ENCODE measurements at regions of chr20 and their contacts with region 1.

Region 1: GRCh38 chr20:16761305-16761829 is 13.2 kb downstream of the OTOR start:
- DNase-seq: peak; percentile 48 to 59 (median 52)
- H3K4me3 ChIP-seq: no peak overlapping the region
- H3K4me3 Mint-ChIP-seq: no peak overlapping the region
- H3K27ac ChIP-seq: no peak overlapping the region
- H3K27ac Mint-ChIP-seq: no peak overlapping the region
- H3K4me1 ChIP-seq: no peaks in the 10 kb centered on the region
- H3K4me1 Mint-ChIP-seq: peaks cover 0 to 2% (median under 1%) of the 10 kb centered on the region in 4 donors
- H3K27me3 ChIP-seq: no peaks in the 10 kb centered on the region
- H3K27me3 Mint-ChIP-seq: peaks cover 7 to 22% of the 10 kb centered on the region in 2 donors

Region 2: GRCh38 chr20:15708984-15709598 is 1052.3 kb before region 1 on chr20:
- CTCF ChIA-PET with region 1: interaction called, 9 read pairs
- POLR2A ChIA-PET with region 1: no interaction called
- intact Hi-C with region 1: loop called (anchors 5 kb)
- DNase-seq: peak in 1 of 5 donors; percentile 2
- H3K4me3 ChIP-seq: no peak overlapping the region
- H3K4me3 Mint-ChIP-seq: no peak overlapping the region
- H3K27ac ChIP-seq: no peak overlapping the region
- H3K27ac Mint-ChIP-seq: no peak overlapping the region
- H3K4me1 ChIP-seq: no peaks in the 10 kb centered on the region
- H3K4me1 Mint-ChIP-seq: no peaks in the 10 kb centered on the region
- H3K27me3 ChIP-seq: no peaks in the 10 kb centered on the region
- H3K27me3 Mint-ChIP-seq: no peaks in the 10 kb centered on the region

Region 3: GRCh38 chr20:16517946-16518783 is 243.2 kb before region 1 on chr20:
- CTCF ChIA-PET with region 1: interaction called, 19 read pairs
- POLR2A ChIA-PET with region 1: no interaction called
- intact Hi-C with region 1: no loop called
- DNase-seq: peak in 4 of 5 donors; percentile 7 to 21 (median 8)
- H3K4me3 ChIP-seq: no peak overlapping the region
- H3K4me3 Mint-ChIP-seq: no peak overlapping the region
- H3K27ac ChIP-seq: no peak overlapping the region
- H3K27ac Mint-ChIP-seq: no peak overlapping the region
- H3K4me1 ChIP-seq: no peaks in the 10 kb centered on the region
- H3K4me1 Mint-ChIP-seq: peaks cover 0 to 2% (median 0%) of the 10 kb centered on the region in 4 donors
- H3K27me3 ChIP-seq: no peaks in the 10 kb centered on the region
- H3K27me3 Mint-ChIP-seq: no peaks in the 10 kb centered on the region

Region 4: GRCh38 chr20:16701296-16701695 is 60.1 kb before region 1 on chr20:
- CTCF ChIA-PET with region 1: interaction called, 17 read pairs
- POLR2A ChIA-PET with region 1: no interaction called
- intact Hi-C with region 1: loop called (anchors 1 kb)
- DNase-seq: peak; percentile 21 to 50 (median 27)
- H3K4me3 ChIP-seq: no peak overlapping the region
- H3K4me3 Mint-ChIP-seq: no peak overlapping the region
- H3K27ac ChIP-seq: no peak overlapping the region
- H3K27ac Mint-ChIP-seq: no peak overlapping the region
- H3K4me1 ChIP-seq: no peaks in the 10 kb centered on the region
- H3K4me1 Mint-ChIP-seq: peaks cover 0 to 3% (median under 1%) of the 10 kb centered on the region in 4 donors
- H3K27me3 ChIP-seq: no peaks in the 10 kb centered on the region
- H3K27me3 Mint-ChIP-seq: peaks cover 5 to 9% of the 10 kb centered on the region in 2 donors

Region 5: DNA sequence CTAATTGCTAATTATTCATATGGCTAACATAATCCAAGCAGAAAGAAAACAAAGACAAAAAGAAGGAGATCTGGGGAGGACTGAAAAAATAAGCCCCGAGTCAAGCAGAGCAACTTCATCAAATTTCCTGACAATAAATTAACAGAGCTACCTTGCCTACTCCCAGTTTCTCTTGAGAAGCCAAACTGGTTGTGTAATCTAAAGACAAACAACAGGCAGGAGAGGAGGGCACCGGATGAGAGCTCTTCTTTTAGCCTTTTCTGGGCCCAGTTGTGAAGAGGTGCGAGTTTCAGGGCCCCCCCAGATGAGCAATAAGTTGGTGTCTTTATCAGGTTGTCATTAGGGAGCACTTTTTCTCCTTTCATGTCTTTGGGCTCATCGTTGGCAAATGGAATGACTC is 268.3 kb after region 1 on chr20:
- CTCF ChIA-PET with region 1: no interaction called
- POLR2A ChIA-PET with region 1: no interaction called
- intact Hi-C with region 1: no loop called
- DNase-seq: no peak
- H3K4me3 ChIP-seq: no peak overlapping the region
- H3K4me3 Mint-ChIP-seq: no peak overlapping the region
- H3K27ac ChIP-seq: no peak overlapping the region
- H3K27ac Mint-ChIP-seq: no peak overlapping the region
- H3K4me1 ChIP-seq: no peaks in the 10 kb centered on the region
- H3K4me1 Mint-ChIP-seq: no peaks in the 10 kb centered on the region
- H3K27me3 ChIP-seq: no peaks in the 10 kb centered on the region
- H3K27me3 Mint-ChIP-seq: peaks cover 0 to under 1% of the 10 kb centered on the region in 2 donors